HEK293 (cell line): ENCODE measurements at regions of chr2 and their contacts with region 1.

Region 1: GRCh38 chr2:74391580-74392448 is 11.7 kb upstream of the DCTN1 start:
- H3K4me3 ChIP-seq: peak overlapping the region; percentile 92
- H3K27ac ChIP-seq: peak overlapping the region; percentile 91
- H3K4me1 ChIP-seq: peaks cover 8% of the 10 kb centered on the region; the same call in 1 of the 2 replicates
- CTCF ChIP-seq: peak; percentile 94

Region 2: GRCh38 chr2:74374509-74375205 is 17.2 kb before region 1 on chr2:
- CTCF ChIA-PET with region 1: interaction called, 11 read pairs
- POLR2A ChIA-PET with region 1: interaction called, 8 read pairs
- H3K4me3 ChIP-seq: no peak overlapping the region
- H3K27ac ChIP-seq: no peak overlapping the region
- H3K4me1 ChIP-seq: peaks cover 21% of the 10 kb centered on the region
- CTCF ChIP-seq: no peak